ENCODE measurements at regions of chr6 and their contacts with region 1.

Region 1: DNA sequence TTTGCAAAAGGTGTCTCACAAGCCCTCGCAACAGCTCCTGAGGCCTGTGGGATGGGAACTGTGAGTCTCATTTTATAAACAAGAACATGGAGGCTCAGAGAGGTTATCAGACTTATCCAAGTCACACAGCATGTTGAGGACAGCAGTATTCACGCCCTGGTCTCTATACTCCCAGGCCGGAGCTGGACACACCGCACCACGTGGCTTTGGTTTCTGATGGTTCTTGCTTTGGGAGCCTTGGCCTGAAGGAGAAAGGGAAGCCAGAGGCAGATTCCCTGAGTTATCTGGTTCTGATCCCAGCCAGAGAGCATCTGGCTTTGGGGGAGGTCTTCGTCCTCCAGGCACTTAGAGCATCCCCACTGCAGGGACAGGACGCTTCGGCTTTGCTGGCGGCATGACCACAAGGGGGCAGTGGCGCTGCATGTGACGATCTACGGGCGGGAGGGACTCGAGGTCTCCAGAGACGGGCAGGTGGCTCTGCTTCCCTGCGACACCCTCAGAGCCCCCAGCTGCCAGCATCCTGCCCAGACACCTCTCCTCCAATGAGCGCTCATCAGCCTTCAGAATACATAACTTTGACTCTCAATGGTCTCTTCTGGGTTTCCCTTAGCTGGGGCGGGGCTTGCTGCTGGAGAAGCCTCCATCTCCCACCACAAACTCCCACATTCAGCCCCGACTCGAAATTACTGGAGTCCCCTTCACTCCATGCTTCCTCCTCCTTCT is 51.4 kb upstream of the SAYSD1 start:
- DNase-seq: peak; percentile 67 to 90 (median 82)
- ATAC-seq: peak; percentile 75
- H3K4me3 ChIP-seq: no peak overlapping the region
- H3K4me3 Mint-ChIP-seq: no peak overlapping the region
- H3K27ac ChIP-seq: no peak overlapping the region
- H3K27ac Mint-ChIP-seq: no peak overlapping the region
- H3K4me1 ChIP-seq: no peaks in the 10 kb centered on the region
- H3K4me1 Mint-ChIP-seq: peaks cover 3% of the 10 kb centered on the region
- H3K27me3 ChIP-seq: no peaks in the 10 kb centered on the region
- H3K27me3 Mint-ChIP-seq: peaks cover 3% of the 10 kb centered on the region
- CTCF ChIP-seq: peak; percentile 83

Region 2: GRCh38 chr6:38997128-38997761 is 169.1 kb before region 1 on chr6:
- CTCF ChIA-PET with region 1: interaction called, 5 read pairs
- POLR2A ChIA-PET with region 1: no interaction called
- intact Hi-C with region 1: loop called in 1 of 2 experiments (anchors 10 kb)
- DNase-seq: peak; percentile 6 to 50 (median 26)
- ATAC-seq: no peak
- H3K4me3 ChIP-seq: no peak overlapping the region
- H3K4me3 Mint-ChIP-seq: no peak overlapping the region
- H3K27ac ChIP-seq: no peak overlapping the region
- H3K27ac Mint-ChIP-seq: no peak overlapping the region
- H3K4me1 ChIP-seq: no peaks in the 10 kb centered on the region
- H3K4me1 Mint-ChIP-seq: no peaks in the 10 kb centered on the region
- H3K27me3 ChIP-seq: no peaks in the 10 kb centered on the region
- H3K27me3 Mint-ChIP-seq: peaks cover 44% of the 10 kb centered on the region
- CTCF ChIP-seq: peak; percentile 48

Region 3: GRCh38 chr6:39088331-39088730 is 78.0 kb before region 1 on chr6:
- CTCF ChIA-PET with region 1: interaction called, 6 read pairs
- POLR2A ChIA-PET with region 1: no interaction called
- intact Hi-C with region 1: loop called in 1 of 2 experiments (anchors 5 kb)
- DNase-seq: peak in 3 of 9 experiments; percentile 28 to 47 (median 44)
- ATAC-seq: peak; percentile 34
- H3K4me3 ChIP-seq: no peak overlapping the region
- H3K4me3 Mint-ChIP-seq: no peak overlapping the region
- H3K27ac ChIP-seq: no peak overlapping the region
- H3K27ac Mint-ChIP-seq: no peak overlapping the region
- H3K4me1 ChIP-seq: no peaks in the 10 kb centered on the region
- H3K4me1 Mint-ChIP-seq: no peaks in the 10 kb centered on the region
- H3K27me3 ChIP-seq: no peaks in the 10 kb centered on the region
- H3K27me3 Mint-ChIP-seq: peaks cover 18% of the 10 kb centered on the region
- CTCF ChIP-seq: no peak

Region 4: GRCh38 chr6:39177130-39177529 is 10.8 kb after region 1 on chr6:
- CTCF ChIA-PET with region 1: interaction called, 18 read pairs
- POLR2A ChIA-PET with region 1: no interaction called
- intact Hi-C with region 1: no loop called
- DNase-seq: no peak
- ATAC-seq: no peak
- H3K4me3 ChIP-seq: no peak overlapping the region
- H3K4me3 Mint-ChIP-seq: no peak overlapping the region
- H3K27ac ChIP-seq: no peak overlapping the region
- H3K27ac Mint-ChIP-seq: no peak overlapping the region
- H3K4me1 ChIP-seq: no peaks in the 10 kb centered on the region
- H3K4me1 Mint-ChIP-seq: no peaks in the 10 kb centered on the region
- H3K27me3 ChIP-seq: no peaks in the 10 kb centered on the region
- H3K27me3 Mint-ChIP-seq: no peaks in the 10 kb centered on the region
- CTCF ChIP-seq: no peak

Region 5: DNA sequence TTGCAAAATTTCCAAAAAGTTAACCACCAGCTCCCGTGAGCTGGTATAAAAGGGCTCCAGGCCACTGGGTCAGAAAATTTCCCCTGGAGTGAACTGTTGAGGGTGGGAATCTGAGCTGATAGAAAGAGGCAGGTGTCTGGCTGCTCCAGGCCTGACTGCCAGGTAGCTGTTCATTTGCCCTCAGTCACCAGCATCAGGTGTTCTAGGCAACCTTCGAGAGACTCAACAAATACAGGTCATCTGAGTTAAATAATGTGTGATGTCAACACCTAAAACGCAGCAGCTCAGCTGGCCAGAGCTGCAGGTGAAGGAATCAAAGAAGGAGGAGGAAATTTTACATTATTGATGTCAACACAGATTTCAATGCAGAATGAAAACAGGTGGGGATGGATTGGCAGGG is 16.3 kb after region 1 on chr6:
- CTCF ChIA-PET with region 1: interaction called, 18 read pairs
- POLR2A ChIA-PET with region 1: no interaction called
- intact Hi-C with region 1: no loop called
- DNase-seq: no peak
- ATAC-seq: no peak
- H3K4me3 ChIP-seq: no peak overlapping the region
- H3K4me3 Mint-ChIP-seq: no peak overlapping the region
- H3K27ac ChIP-seq: no peak overlapping the region
- H3K27ac Mint-ChIP-seq: no peak overlapping the region
- H3K4me1 ChIP-seq: no peaks in the 10 kb centered on the region
- H3K4me1 Mint-ChIP-seq: no peaks in the 10 kb centered on the region
- H3K27me3 ChIP-seq: no peaks in the 10 kb centered on the region
- H3K27me3 Mint-ChIP-seq: no peaks in the 10 kb centered on the region
- CTCF ChIP-seq: no peak

Region 6: DNA sequence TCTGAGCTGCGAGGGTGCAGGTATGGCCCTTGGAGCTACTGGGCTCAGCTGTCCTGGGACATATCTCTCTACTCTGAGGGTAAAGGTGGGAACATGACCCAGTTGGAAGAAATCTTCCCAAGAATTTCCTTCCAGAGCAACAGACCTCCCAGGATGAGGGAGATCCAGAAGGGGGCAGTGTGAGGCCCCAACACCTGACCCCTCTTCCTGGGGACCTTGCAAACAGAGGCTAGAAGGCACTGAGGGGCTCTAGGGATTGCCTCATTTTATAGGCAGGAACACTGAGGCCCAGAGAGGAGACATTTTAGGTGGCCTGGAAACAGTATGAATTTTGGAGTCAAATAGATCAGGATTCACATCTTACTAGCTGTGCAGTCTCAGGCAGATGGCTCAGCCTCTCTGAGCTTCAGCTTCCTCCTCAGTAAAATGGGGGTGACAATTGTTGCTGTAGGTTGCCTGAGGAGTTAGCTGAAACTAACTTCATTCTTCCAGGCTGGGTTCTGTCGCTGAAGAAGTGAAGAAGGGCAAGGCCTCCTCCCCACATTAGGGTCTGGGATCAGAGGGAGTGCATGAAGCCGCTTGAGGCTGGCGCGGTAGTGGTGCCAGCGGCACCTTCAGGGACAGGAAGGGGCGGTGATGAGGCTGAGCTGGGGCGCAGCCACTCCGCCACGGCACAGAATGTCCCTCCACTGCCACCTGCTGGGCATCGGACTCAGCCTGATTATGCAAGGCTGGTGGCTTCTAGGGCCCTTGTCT is 136.5 kb after region 1 on chr6:
- CTCF ChIA-PET with region 1: interaction called, 359 read pairs
- POLR2A ChIA-PET with region 1: interaction called, 3 read pairs
- intact Hi-C with region 1: loop called (anchors 1 kb)
- DNase-seq: peak; percentile 76 to 90 (median 86)
- ATAC-seq: peak; percentile 99
- H3K4me3 ChIP-seq: peak overlapping the region in 1 of 2 experiments; percentile 27
- H3K4me3 Mint-ChIP-seq: peak overlapping the region; percentile 70
- H3K27ac ChIP-seq: no peak overlapping the region
- H3K27ac Mint-ChIP-seq: no peak overlapping the region
- H3K4me1 ChIP-seq: no peaks in the 10 kb centered on the region
- H3K4me1 Mint-ChIP-seq: peaks cover 6% of the 10 kb centered on the region
- H3K27me3 ChIP-seq: no peaks in the 10 kb centered on the region
- H3K27me3 Mint-ChIP-seq: no peaks in the 10 kb centered on the region
- CTCF ChIP-seq: peak; percentile 74

Region 7: GRCh38 chr6:39309942-39310531 is 143.7 kb after region 1 on chr6:
- CTCF ChIA-PET with region 1: interaction called, 359 read pairs
- POLR2A ChIA-PET with region 1: interaction called, 3 read pairs
- intact Hi-C with region 1: loop called (anchors 1 kb)
- DNase-seq: peak in 8 of 9 experiments; percentile 14 to 67 (median 50)
- ATAC-seq: peak; percentile 51
- H3K4me3 ChIP-seq: no peak overlapping the region
- H3K4me3 Mint-ChIP-seq: no peak overlapping the region
- H3K27ac ChIP-seq: no peak overlapping the region
- H3K27ac Mint-ChIP-seq: no peak overlapping the region
- H3K4me1 ChIP-seq: no peaks in the 10 kb centered on the region
- H3K4me1 Mint-ChIP-seq: peaks cover 3% of the 10 kb centered on the region
- H3K27me3 ChIP-seq: peaks cover 0 to 13% of the 10 kb centered on the region in 2 experiments
- H3K27me3 Mint-ChIP-seq: peaks cover 24% of the 10 kb centered on the region
- CTCF ChIP-seq: peak; percentile 74